ENCODE measurements at regions of chr10 and their contacts with region 1.

Region 1: DNA sequence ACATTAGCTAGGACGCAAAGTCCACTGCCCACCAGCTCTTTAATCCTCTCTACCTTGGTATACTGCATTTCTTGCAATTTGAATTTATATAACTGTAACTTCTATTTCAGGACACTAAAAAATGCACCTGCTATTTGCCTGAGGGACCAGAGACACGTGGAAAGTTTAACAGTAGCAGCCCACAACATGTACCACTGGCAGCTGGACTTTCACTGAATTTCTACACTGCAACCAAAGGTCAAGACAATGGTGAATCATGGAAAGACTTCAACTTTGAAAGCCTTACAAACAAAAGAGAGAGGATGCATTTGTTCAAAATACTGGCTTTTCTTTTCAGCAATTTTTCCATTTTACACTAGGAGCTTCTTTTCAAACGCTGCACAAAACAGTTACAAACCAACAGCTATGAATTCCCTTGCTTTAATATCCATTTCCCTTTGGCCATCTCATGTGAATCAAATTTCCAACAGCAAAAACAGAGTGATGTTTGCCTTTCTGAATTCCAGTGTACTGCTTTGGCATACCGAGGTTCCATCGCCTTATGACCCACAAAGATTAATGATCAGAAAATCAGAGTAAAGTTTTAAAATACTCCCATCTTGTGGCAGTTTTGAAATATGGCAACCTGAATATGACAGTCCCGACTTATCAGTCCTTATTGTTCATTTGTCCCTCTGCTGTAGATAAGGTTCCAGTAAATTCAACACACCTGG is 29.9 kb upstream of the HNRNPH3 start:
- DNase-seq: no peak
- ATAC-seq: peak; percentile 26 to 63
- H3K4me3 ChIP-seq: no peak overlapping the region
- H3K27ac ChIP-seq: no peak overlapping the region
- H3K4me1 ChIP-seq: no peaks in the 10 kb centered on the region
- H3K27me3 ChIP-seq: no peaks in the 10 kb centered on the region

Region 2: DNA sequence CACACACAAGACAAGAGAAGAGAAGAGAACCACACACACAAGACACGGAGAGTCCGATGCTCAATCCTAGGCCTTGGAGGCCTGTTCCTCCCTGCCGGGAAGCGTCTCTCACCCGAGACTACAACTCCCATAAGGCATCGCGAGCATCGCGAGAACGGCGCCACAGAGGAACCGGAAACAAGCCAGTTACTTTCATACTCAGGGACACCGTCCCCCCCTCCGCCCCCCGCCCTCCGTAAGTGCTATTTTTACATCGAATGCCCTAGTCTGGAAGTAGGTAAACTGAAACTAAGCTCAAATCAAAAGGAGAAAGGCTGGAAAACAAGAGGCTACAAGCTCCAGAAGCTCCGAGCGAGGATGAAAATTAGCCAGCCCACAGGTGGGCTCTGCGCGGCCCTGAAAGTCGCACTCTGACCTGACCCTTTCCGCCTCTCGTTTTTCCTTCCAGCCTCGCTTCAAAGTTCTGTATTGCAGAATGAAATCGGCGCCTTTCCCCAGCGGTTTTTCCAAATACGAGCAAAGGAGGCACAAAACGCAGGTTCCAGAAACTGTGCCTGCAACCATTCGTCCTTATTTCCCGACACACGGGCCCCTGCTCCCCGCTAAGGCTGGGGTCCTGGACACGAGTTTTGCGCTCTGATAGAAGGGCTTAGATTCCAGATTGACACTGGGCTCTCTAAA is 452.5 kb before region 1 on chr10:
- intact Hi-C with region 1: loop called in 1 of 4 experiments (anchors 10 kb)
- DNase-seq: peak; percentile 94 to 99 (median 98)
- ATAC-seq: peak; percentile 99
- H3K4me3 ChIP-seq: peak overlapping the region; percentile 98
- H3K27ac ChIP-seq: peak overlapping the region; percentile 98
- H3K4me1 ChIP-seq: no peaks in the 10 kb centered on the region
- H3K27me3 ChIP-seq: no peaks in the 10 kb centered on the region

Region 3: DNA sequence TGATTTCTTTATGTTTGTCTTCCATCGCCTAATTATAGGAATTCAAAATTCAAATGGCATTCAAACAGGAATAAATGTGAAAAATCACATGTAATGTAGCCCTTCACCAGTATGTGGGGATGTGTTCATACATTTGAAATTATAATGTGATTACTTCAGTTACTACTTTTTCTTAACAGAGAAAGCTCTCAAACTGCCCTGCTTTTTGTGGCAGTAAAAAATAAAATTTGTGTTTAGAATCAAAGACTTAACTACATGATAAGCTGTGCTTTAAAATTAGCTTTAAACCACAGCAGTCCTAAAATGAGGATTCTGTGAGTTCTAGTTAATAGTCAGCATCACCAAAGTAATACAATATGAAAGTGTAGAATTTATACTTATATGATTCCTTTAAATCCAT is 219.1 kb before region 1 on chr10:
- intact Hi-C with region 1: loop called in 1 of 4 experiments (anchors 5 kb)
- DNase-seq: no peak
- ATAC-seq: peak in 1 of 2 donors; percentile 38
- H3K4me3 ChIP-seq: no peak overlapping the region
- H3K27ac ChIP-seq: no peak overlapping the region
- H3K4me1 ChIP-seq: no peaks in the 10 kb centered on the region
- H3K27me3 ChIP-seq: no peaks in the 10 kb centered on the region

Region 4: GRCh38 chr10:68212721-68213352 is 89.1 kb before region 1 on chr10:
- intact Hi-C with region 1: loop called in 3 of 4 experiments (anchors 5 to 10 kb)
- DNase-seq: no peak
- ATAC-seq: no peak
- H3K4me3 ChIP-seq: no peak overlapping the region
- H3K27ac ChIP-seq: no peak overlapping the region
- H3K4me1 ChIP-seq: no peaks in the 10 kb centered on the region
- H3K27me3 ChIP-seq: no peaks in the 10 kb centered on the region